ENCODE measurements at regions of chr17 and their contacts with region 1.

Region 1: GRCh38 chr17:59427425-59427921 is 96.0 kb downstream of the YPEL2 start:
- DNase-seq: no peak
- ATAC-seq: no peak
- H3K4me3 ChIP-seq: no peak overlapping the region
- H3K27ac ChIP-seq: peak overlapping the region; percentile 93 to 98
- H3K4me1 ChIP-seq: peaks cover 10 to 14% of the 10 kb centered on the region in 2 donors
- H3K27me3 ChIP-seq: no peaks in the 10 kb centered on the region

Region 2: DNA sequence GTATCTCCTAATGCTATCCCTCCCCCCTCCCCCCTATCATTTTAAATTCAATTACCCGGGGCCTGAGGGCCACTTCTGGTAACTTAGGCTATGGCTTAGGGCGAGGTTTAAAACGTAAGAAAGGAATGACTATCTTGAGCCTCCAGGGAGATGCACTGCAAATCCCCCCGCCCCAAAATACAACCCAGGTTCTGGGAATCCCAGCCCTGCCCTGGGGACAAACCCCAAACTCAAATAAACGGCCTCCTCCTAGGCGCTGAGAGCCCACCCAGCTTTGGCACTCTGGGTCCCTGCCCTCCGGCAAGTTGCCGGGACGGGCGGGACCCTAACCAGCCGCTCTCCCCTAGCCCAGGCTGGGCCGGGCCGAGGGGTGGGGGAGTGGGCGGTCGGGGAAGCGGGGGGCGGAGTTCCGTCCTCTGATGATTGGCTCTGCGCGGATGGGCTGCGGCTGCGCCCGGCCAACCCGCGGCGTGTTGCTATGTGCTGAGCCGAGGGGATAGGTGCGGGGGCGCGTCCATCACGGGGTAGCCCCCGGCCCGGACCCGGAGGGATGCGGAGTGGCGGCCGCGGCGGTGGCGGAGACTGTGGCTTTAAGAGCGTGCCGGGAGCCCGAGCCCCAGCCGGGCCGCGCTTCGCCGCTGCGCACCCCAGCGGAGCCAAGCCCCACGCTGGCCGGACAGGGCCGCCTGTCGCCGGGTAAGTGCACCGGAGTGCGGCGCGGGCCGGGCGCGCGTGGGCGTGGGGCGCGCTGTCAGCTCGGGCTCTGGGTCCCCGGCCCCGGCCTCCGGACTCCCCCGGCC is 96.1 kb before region 1 on chr17 and contains the start of gene YPEL2:
- intact Hi-C with region 1: loop called in 1 of 2 experiments (anchors 1 kb)
- DNase-seq: peak; percentile 98 to 99
- ATAC-seq: peak; percentile 94
- H3K4me3 ChIP-seq: peak within 1 kb of the TSS; percentile 81 to 97
- H3K27ac ChIP-seq: peak within 1 kb of the TSS; percentile 96 to 100
- H3K4me1 ChIP-seq: peaks cover 10 to 15% of the 10 kb centered on the region in 2 donors
- H3K27me3 ChIP-seq: no peaks in the 10 kb centered on the region
- total RNA-seq, gene YPEL2: 38.5 to 54.0 TPM

Region 3: GRCh38 chr17:59372138-59372857 is 55.2 kb before region 1 on chr17:
- intact Hi-C with region 1: loop called in 1 of 2 experiments (anchors 5 kb)
- DNase-seq: peak in 1 of 2 donors; percentile 79
- ATAC-seq: peak; percentile 90
- H3K4me3 ChIP-seq: no peak overlapping the region
- H3K27ac ChIP-seq: peak overlapping the region; percentile 99
- H3K4me1 ChIP-seq: peaks cover 13 to 53% of the 10 kb centered on the region in 2 donors
- H3K27me3 ChIP-seq: no peaks in the 10 kb centered on the region

Region 4: DNA sequence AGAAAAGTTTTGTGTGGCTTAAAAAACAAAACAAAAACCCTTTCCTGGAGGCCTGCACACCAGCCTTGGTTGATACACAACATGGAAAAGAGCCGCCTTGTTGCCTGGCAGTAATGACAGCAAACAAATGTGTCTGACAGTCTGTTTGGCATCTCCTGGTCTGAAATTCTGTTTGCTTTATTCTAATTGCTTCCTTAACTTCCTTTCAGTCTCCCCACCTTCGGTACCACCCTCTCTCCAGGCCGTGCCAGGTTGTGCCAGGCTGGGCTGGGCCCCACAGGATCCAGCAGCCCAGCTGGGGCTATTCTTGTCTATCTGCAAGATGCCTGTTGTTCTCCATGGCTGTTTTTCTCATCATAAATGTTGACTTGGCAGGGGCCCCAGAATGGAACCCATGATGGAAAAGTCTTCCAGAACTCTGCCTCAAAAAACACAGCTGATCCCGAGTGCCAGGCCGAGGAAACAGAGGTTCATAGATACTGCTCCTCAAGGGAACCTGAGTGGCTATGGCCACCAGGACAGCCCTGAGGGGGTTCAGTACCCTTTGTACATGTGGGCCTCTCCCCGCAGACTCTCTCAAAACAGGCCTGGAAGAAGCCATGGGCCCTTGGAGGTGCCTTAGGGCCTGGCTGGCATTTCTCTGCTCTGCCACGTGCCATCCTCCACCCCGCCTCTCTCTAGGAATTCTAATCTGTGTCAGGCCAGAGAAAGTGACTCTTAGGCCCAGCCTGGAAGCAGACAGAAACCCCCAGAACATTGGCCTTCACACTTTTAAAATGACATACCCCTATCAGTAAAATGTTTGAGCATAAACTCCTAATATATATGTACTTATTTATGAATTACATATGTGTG is 45.5 kb before region 1 on chr17:
- intact Hi-C with region 1: loop called (anchors 2 to 5 kb)
- DNase-seq: peak in 1 of 2 donors; percentile 76
- ATAC-seq: peak; percentile 89
- H3K4me3 ChIP-seq: no peak overlapping the region
- H3K27ac ChIP-seq: peak overlapping the region; percentile 88 to 98
- H3K4me1 ChIP-seq: peaks cover 7 to 8% of the 10 kb centered on the region in 2 donors
- H3K27me3 ChIP-seq: no peaks in the 10 kb centered on the region

Region 5: GRCh38 chr17:59387351-59388068 is 40.0 kb before region 1 on chr17:
- intact Hi-C with region 1: loop called in 1 of 2 experiments (anchors 5 kb)
- DNase-seq: no peak
- ATAC-seq: peak; percentile 71
- H3K4me3 ChIP-seq: no peak overlapping the region
- H3K27ac ChIP-seq: peak overlapping the region; percentile 18 to 23
- H3K4me1 ChIP-seq: peaks cover 0 to 6% of the 10 kb centered on the region in 2 donors
- H3K27me3 ChIP-seq: no peaks in the 10 kb centered on the region

Region 6: DNA sequence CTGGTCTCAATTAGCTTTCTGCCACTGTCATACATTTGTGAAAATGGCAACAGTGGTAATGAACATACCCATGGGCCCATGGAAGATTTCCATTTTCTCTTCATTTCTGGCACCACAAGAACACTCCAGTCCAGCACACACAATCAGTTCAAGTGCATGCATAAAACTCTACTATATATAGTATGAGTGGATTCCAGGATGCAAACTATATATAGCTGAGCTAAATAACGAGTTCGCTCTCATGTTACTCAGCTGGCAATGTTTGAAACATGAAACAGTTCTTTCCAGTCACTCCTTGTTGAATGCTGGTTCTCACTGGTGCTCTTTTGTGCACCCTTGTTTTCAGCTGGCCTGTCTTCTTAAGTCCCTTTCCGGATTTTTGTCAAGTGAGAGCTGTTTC is 62.7 kb after region 1 on chr17:
- intact Hi-C with region 1: no loop called
- DNase-seq: no peak
- ATAC-seq: peak; percentile 59
- H3K4me3 ChIP-seq: no peak overlapping the region
- H3K27ac ChIP-seq: peak overlapping the region; percentile 82 to 87
- H3K4me1 ChIP-seq: peaks cover 5 to 7% of the 10 kb centered on the region in 2 donors
- H3K27me3 ChIP-seq: no peaks in the 10 kb centered on the region

Region 7: GRCh38 chr17:59634632-59635541 is 207.4 kb after region 1 on chr17:
- intact Hi-C with region 1: no loop called
- DNase-seq: no peak
- ATAC-seq: no peak
- H3K4me3 ChIP-seq: no peak overlapping the region
- H3K27ac ChIP-seq: no peak overlapping the region
- H3K4me1 ChIP-seq: peaks cover 2 to 11% of the 10 kb centered on the region in 2 donors
- H3K27me3 ChIP-seq: no peaks in the 10 kb centered on the region